Heart right ventricle (tissue), 16 donors: ENCODE measurements at regions of chr14 and their contacts with region 1.

Region 1: DNA sequence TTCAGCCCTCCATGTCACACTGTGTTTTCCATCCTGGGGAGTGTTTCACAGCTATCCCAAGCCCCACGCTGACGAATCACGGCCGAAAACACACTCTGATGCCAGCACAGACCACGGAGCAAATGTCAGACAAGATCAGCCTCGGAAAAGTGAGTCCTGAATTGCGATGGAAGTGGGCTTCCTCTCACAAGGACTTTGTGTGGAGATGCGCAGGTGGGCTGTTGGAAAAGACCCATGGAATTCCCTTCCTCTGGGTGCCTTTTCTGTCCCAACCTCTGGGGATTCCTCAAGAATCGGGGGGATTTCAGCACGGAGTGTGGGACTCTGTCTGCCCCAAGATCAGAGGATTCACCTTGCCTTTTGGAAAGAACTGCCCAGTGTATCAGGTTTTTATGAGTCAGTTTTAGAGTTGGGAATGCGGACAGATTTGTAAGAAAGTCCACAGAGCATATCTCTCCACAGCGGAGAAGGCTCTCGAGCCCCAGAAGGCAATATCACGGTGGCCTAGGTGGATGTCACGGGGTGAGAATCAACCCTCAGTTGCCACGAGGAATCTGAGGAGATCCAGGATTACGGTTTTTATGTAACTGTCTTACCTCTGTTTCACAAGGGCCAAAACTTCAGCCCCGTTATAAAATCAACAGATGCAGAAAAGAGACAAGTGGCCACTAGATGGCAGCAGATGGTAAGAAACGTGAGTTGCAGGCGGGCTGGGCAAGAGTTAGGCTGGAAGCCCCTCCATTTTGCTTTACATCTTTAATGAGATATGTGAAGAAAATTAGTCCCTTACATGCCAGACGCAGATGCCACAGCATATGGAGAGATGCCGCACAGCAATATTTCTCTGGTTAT is 201.9 kb downstream of the DAD1 start:
- DNase-seq: peak in 1 of 2 donors; percentile 80
- ATAC-seq: peak in 7 of 8 donors; percentile 51 to 76 (median 62)
- H3K4me3 ChIP-seq: no peak overlapping the region
- H3K27ac ChIP-seq: no peak overlapping the region
- H3K4me1 ChIP-seq: peaks cover 0 to 12% (median 0%) of the 10 kb centered on the region in 9 donors
- H3K27me3 ChIP-seq: peaks cover 0 to 27% (median 19%) of the 10 kb centered on the region in 7 donors
- CTCF ChIP-seq: peak; percentile 66 to 87 (median 81)

Region 2: DNA sequence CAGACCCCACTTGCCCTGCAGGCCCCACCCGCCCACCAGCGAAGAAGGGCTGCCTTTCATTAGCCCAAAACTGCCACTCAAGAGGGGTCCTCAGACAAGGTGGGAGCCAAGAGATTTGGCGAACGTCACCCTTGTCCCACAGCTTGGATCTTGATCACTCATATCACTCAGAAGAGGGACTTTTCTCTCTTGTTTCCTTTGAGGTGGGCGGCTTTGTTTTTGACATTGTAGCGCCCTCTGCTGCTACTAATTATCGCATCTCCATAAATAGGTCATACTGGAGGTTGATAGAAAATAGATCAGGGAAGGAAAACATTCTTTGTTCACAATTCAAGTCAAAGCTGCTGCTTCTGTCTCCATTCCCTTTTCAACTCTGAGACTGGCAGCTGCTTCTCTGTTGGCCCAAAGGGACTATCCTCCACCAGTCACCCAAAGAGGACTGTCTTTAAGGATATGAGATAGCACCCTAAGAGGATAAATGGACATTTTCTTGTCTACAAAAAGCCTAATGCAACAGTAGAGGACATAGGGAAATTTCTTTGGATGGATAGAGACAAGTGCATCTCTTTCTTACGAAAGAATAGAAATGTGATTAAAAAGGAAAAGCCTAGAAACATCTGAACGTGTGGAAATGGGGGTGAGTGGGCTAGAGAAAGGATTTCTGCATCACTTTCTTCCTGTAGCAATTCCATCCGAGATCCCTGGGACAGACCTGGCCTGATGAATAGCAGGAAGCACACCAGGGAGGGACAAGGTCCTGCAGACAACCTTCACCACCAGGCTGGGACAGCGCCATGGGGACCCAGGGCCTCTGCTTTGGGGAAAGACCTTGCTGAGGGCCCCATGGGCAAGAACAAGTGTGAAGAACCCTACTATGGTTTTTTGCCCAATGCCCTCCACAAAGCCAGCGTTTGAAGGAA is 86.0 kb after region 1 on chr14:
- intact Hi-C with region 1: loop called (anchors 1 to 5 kb)
- DNase-seq: peak in 1 of 2 donors; percentile 40
- ATAC-seq: peak in 6 of 8 donors; percentile 18 to 61 (median 53)
- H3K4me3 ChIP-seq: no peak overlapping the region
- H3K27ac ChIP-seq: no peak overlapping the region
- H3K4me1 ChIP-seq: peaks cover 3 to 78% (median 20%) of the 10 kb centered on the region in 9 donors
- H3K27me3 ChIP-seq: no peaks in the 10 kb centered on the region
- CTCF ChIP-seq: peak; percentile 16 to 70 (median 61)

Region 3: GRCh38 chr14:22653012-22653621 is 266.0 kb after region 1 on chr14:
- intact Hi-C with region 1: loop called (anchors 2 to 10 kb)
- DNase-seq: peak; percentile 18 to 55
- ATAC-seq: peak in 7 of 8 donors; percentile 66 to 88 (median 77)
- H3K4me3 ChIP-seq: no peak overlapping the region
- H3K27ac ChIP-seq: no peak overlapping the region
- H3K4me1 ChIP-seq: peaks cover 0 to 9% (median 0%) of the 10 kb centered on the region in 9 donors
- H3K27me3 ChIP-seq: peaks cover 0 to 6% (median 0%) of the 10 kb centered on the region in 7 donors
- CTCF ChIP-seq: peak; percentile 55 to 88 (median 79)

Region 4: GRCh38 chr14:22822571-22823098 is 435.5 kb after region 1 on chr14:
- intact Hi-C with region 1: loop called in 2 of 10 experiments (anchors 10 kb)
- DNase-seq: peak; percentile 76 to 82
- ATAC-seq: peak; percentile 83 to 92 (median 88)
- H3K4me3 ChIP-seq: peak overlapping the region; percentile 16 to 60 (median 48)
- H3K27ac ChIP-seq: peak overlapping the region in 5 of 10 donors; percentile 2 to 82 (median 50)
- H3K4me1 ChIP-seq: peaks cover 3 to 61% (median 34%) of the 10 kb centered on the region in 9 donors
- H3K27me3 ChIP-seq: no peaks in the 10 kb centered on the region
- CTCF ChIP-seq: peak; percentile 72 to 99 (median 94)

Region 5: DNA sequence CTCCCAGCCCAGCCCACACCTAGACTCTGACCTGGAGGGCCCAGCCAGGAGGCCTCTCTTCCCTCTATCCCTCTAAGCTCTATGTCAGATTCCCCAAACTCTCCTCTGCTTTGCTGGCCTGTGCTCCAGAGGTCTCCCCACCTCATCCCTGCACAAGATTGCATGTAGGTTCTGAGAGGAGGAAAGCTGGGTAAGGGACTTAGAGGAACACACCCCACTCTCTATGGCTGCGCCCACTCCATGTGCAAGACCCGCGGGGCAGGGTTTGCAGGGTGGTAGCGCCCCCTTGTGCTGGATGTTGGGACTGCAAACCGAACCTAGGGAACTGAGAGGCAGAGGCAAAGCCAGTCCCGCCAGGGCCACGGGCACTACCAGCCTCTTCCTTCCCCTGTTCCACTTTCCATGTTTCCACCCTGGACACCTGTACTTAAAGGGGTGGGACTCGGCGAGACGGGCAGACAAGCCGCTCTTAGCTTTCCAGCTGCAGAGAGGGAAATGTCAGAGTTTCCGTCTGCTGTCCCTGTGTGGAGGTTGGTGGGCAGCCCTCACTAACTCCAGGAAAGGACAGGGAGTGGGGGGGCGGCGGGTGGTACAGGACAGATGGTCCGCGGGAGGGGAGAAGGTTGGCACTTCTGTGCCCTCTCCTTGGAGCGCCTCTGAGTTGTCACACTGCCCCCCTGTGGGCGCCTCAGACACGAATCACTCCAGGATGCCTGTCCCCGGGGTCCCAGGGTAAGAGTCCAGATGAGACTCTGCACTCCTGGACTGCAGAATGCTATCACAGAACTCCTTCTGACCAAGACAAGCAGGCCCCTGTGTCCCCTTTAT is 466.0 kb after region 1 on chr14:
- intact Hi-C with region 1: loop called in 5 of 10 experiments (anchors 5 to 10 kb)
- DNase-seq: peak; percentile 90 to 92
- ATAC-seq: peak; percentile 48 to 80 (median 64)
- H3K4me3 ChIP-seq: peak overlapping the region; percentile 24 to 61 (median 53)
- H3K27ac ChIP-seq: peak overlapping the region in 7 of 10 donors; percentile 5 to 79 (median 56)
- H3K4me1 ChIP-seq: peaks cover 19 to 54% (median 47%) of the 10 kb centered on the region in 9 donors
- H3K27me3 ChIP-seq: no peaks in the 10 kb centered on the region
- CTCF ChIP-seq: peak; percentile 85 to 97 (median 90)

Region 6: GRCh38 chr14:23171222-23172012 is 784.3 kb after region 1 on chr14:
- intact Hi-C with region 1: no loop called
- DNase-seq: no peak
- ATAC-seq: no peak
- H3K4me3 ChIP-seq: no peak overlapping the region
- H3K27ac ChIP-seq: no peak overlapping the region
- H3K4me1 ChIP-seq: peaks cover 0 to 51% (median 14%) of the 10 kb centered on the region in 9 donors
- H3K27me3 ChIP-seq: no peaks in the 10 kb centered on the region
- CTCF ChIP-seq: no peak